CD8-positive, alpha-beta memory T cell (primary cell): ENCODE measurements at regions of chr22 and their contacts with region 1.

Region 1: GRCh38 chr22:31661851-31662656 is at the start of gene PISD:
- DNase-seq: peak; percentile 94 to 98 (median 95)
- H3K4me3 ChIP-seq: peak within 1 kb of the TSS; percentile 79
- H3K4me3 Mint-ChIP-seq: peak within 1 kb of the TSS; percentile 88 to 100 (median 99)
- H3K27ac ChIP-seq: peak within 1 kb of the TSS; percentile 85
- H3K27ac Mint-ChIP-seq: peak within 1 kb of the TSS; percentile 79 to 100 (median 98)
- H3K4me1 ChIP-seq: peaks cover 27% of the 10 kb centered on the region
- H3K4me1 Mint-ChIP-seq: peaks cover 29 to 45% (median 44%) of the 10 kb centered on the region in 3 donors
- H3K27me3 ChIP-seq: no peaks in the 10 kb centered on the region
- H3K27me3 Mint-ChIP-seq: peaks cover 0 to 2% of the 10 kb centered on the region in 2 donors
- total RNA-seq, gene PISD: 48.1 to 49.6 TPM

Region 2: GRCh38 chr22:31630331-31631329 is 31.4 kb before region 1 on chr22:
- CTCF ChIA-PET with region 1: interaction called, 5 read pairs
- POLR2A ChIA-PET with region 1: interaction called, 17 read pairs
- DNase-seq: peak; percentile 84 to 92 (median 89)
- H3K4me3 ChIP-seq: peak overlapping the region; percentile 66
- H3K4me3 Mint-ChIP-seq: peak overlapping the region; percentile 84 to 95 (median 88)
- H3K27ac ChIP-seq: peak overlapping the region; percentile 75
- H3K27ac Mint-ChIP-seq: peak overlapping the region; percentile 63 to 97 (median 94)
- H3K4me1 ChIP-seq: peaks cover 39% of the 10 kb centered on the region
- H3K4me1 Mint-ChIP-seq: peaks cover 22 to 57% (median 36%) of the 10 kb centered on the region in 3 donors
- H3K27me3 ChIP-seq: no peaks in the 10 kb centered on the region
- H3K27me3 Mint-ChIP-seq: no peaks in the 10 kb centered on the region

Region 3: DNA sequence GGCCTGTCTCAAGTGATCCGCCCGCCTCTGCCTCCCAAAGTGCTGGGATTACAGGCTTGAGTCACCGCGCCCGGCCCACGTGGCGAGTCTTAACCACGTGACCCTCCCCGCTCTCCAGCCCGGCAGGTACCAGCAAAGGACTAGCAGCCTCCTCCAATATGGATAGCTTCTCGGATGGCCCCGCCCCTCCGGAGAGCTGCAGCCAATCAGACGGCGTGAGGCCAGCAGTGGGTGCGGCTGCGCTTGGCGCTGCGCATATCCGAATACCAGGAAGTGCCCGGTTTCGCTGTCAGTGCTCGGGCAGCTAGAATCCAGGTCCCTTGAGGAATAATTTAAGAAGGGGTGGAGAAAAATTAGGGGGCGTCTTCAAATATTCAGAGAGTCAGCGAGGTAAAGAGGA is 14.6 kb after region 1 on chr22:
- CTCF ChIA-PET with region 1: interaction called, 22 read pairs
- POLR2A ChIA-PET with region 1: interaction called, 24 read pairs
- DNase-seq: peak; percentile 85 to 93 (median 90)
- H3K4me3 ChIP-seq: peak overlapping the region; percentile 74
- H3K4me3 Mint-ChIP-seq: peak overlapping the region; percentile 86 to 99 (median 95)
- H3K27ac ChIP-seq: peak overlapping the region; percentile 68
- H3K27ac Mint-ChIP-seq: peak overlapping the region; percentile 70 to 99 (median 96)
- H3K4me1 ChIP-seq: no peaks in the 10 kb centered on the region
- H3K4me1 Mint-ChIP-seq: peaks cover 6 to 13% (median 6%) of the 10 kb centered on the region in 3 donors
- H3K27me3 ChIP-seq: no peaks in the 10 kb centered on the region
- H3K27me3 Mint-ChIP-seq: peaks cover 0 to 1% of the 10 kb centered on the region in 2 donors

Region 4: GRCh38 chr22:31943976-31944699 is 282.1 kb after region 1 on chr22 and contains the start of gene YWHAH:
- CTCF ChIA-PET with region 1: interaction called, 9 read pairs
- POLR2A ChIA-PET with region 1: interaction called, 16 read pairs
- DNase-seq: peak; percentile 80 to 92 (median 83)
- H3K4me3 ChIP-seq: peak within 1 kb of the TSS; percentile 69
- H3K4me3 Mint-ChIP-seq: peak within 1 kb of the TSS in 5 of 7 donors; percentile 89 to 96 (median 95)
- H3K27ac ChIP-seq: peak within 1 kb of the TSS; percentile 89
- H3K27ac Mint-ChIP-seq: peak within 1 kb of the TSS; percentile 76 to 96 (median 92)
- H3K4me1 ChIP-seq: peaks cover 24% of the 10 kb centered on the region
- H3K4me1 Mint-ChIP-seq: peaks cover 11 to 13% (median 13%) of the 10 kb centered on the region in 3 donors
- H3K27me3 ChIP-seq: no peaks in the 10 kb centered on the region
- H3K27me3 Mint-ChIP-seq: no peaks in the 10 kb centered on the region
- total RNA-seq, gene YWHAH: 185 to 198 TPM